BJ (cell line): ENCODE measurements at regions of chr5 and their contacts with region 1.

Region 1: DNA sequence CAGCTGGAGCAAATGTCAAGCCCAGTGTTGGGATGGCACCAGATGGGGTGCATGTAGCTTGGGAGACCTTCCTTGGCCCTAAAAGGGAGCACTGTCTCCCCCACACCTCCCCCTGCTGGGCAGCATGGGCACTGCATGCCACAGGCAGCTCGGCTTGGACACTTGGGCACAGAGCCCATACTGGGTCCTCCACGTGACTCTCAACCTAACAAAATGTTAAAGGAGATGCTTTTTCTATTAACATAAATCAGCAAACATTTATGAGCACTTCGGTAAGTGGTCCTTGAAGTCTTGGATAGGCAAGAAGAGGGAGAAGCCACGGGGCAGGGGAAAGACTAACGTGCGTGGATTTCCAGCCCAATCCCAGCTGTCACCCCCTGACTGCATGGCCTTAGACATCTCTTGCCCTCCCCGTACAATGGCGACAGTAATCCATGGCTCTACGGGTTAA is 23.9 kb upstream of the MAPK9 start:
- DNase-seq: no peak
- H3K4me3 ChIP-seq: no peak overlapping the region
- H3K27me3 ChIP-seq: no peaks in the 10 kb centered on the region
- CTCF ChIP-seq: peak; percentile 93

Region 2: GRCh38 chr5:180304431-180305375 is 11.1 kb before region 1 on chr5:
- CTCF ChIA-PET with region 1: interaction called, 51 read pairs
- POLR2A ChIA-PET with region 1: no interaction called
- DNase-seq: no peak
- H3K4me3 ChIP-seq: no peak overlapping the region
- H3K27me3 ChIP-seq: no peaks in the 10 kb centered on the region
- CTCF ChIP-seq: no peak

Region 3: GRCh38 chr5:180353980-180354452 is 38.2 kb after region 1 on chr5:
- CTCF ChIA-PET with region 1: no interaction called
- POLR2A ChIA-PET with region 1: no interaction called
- DNase-seq: no peak
- H3K4me3 ChIP-seq: peak overlapping the region; percentile 67
- H3K27me3 ChIP-seq: peaks cover 6% of the 10 kb centered on the region; the same call in 1 of the 2 replicates
- CTCF ChIP-seq: no peak